GM10248 (cell line): ENCODE measurements at regions of chr19 and their contacts with region 1.

Region 1: DNA sequence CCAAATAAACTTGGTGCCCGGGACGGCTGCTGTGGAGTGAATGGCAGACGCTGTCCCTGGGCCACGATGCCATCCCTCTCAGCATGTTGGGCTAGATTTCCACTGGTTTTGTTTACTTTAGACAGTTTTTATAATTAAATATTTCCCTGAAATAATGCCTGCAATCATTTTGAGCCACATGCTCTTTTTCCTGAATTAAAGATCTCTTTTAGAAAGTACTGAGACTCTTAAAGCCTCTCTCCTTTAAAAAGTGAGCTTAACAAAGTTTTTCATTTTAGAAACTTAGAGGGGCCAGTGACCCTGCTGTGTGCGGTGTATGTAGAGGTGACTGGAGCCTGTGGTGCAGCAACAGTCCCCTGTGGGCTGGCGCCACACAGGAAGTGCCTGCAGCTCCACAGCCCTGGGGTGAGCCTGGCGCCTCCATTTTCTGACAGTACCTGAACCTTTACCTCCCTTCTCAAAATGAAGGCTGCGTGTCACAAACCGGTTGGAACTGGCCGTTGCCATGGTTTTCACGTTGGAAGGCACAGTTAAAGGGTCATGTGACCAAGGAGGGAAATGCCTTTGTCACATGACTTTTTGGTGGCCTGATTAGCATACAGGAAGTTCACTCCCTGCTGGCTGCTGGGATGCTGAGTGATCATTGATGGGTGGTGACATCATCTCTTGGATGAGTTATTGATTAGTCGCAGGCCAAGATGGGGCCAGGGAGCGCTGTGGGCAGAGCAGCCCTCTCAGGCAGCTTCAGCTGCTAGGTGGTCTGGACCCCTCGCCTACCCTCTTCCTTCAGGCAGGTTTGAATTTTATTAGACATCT is 26.3 kb downstream of the TSSK6 start:
- DNase-seq: peak; percentile 67
- CTCF ChIP-seq: no peak

Region 2: GRCh38 chr19:19361075-19361594 is 127.9 kb before region 1 on chr19:
- CTCF ChIA-PET with region 1: interaction called, 220 read pairs
- POLR2A ChIA-PET with region 1: no interaction called
- DNase-seq: peak; percentile 82
- CTCF ChIP-seq: peak; percentile 71

Region 3: GRCh38 chr19:19385108-19385899 is 103.8 kb before region 1 on chr19:
- CTCF ChIA-PET with region 1: interaction called, 13 read pairs
- POLR2A ChIA-PET with region 1: no interaction called
- DNase-seq: peak; percentile 98
- CTCF ChIP-seq: peak; percentile 23

Region 4: GRCh38 chr19:19410275-19411192 is 78.5 kb before region 1 on chr19:
- CTCF ChIA-PET with region 1: interaction called, 44 read pairs
- POLR2A ChIA-PET with region 1: interaction called, 3 read pairs
- DNase-seq: peak; percentile 55
- CTCF ChIP-seq: peak; percentile 9

Region 5: DNA sequence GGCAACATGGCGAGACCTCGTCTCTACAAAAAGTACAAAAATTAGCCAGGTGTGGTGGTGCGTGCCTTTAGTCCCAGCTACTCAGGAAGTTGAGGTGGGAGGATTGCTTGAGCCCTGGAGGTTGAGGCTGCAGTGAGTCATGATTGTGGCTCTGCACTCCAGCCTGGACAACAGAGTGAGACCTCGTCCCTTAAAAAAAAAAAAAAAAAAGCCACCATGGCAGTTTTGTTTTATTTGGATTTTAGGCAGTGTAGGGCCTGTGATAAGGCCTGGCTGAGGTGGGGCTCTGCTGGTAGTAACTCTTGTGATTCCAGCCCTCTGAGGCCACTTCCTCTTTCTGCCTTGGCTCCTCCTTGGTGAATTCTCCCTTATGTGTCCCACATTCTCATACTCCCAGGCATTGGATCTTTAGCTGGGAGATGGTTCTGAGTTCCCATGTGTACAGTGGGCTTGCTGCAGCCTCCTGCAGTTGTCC is 44.4 kb before region 1 on chr19:
- CTCF ChIA-PET with region 1: interaction called, 16 read pairs
- POLR2A ChIA-PET with region 1: no interaction called
- DNase-seq: no peak
- CTCF ChIP-seq: no peak

Region 6: DNA sequence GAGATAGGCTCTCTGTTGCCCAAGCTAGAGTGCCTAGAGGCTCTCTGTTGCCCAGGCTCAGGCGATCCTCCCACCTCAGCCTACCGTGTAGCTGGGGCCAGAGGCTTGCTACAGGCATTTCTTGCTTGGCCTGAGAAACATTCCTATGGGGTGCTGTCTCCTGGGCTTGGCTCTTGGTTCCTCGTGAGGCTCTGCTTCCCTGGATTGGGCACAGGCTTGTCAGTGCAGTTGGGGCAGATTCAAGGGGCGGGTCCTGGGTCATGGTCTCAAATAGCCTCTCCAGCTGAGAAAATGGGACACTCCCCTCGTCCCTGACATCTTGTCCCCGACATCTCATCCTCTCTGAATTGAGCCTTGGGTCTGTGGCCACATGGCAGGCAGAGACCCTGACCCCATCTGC is 21.3 kb after region 1 on chr19:
- CTCF ChIA-PET with region 1: interaction called, 13 read pairs
- POLR2A ChIA-PET with region 1: no interaction called
- DNase-seq: no peak
- CTCF ChIP-seq: no peak